ENCODE measurements at regions of chr1 and their contacts with region 1.

Region 1: DNA sequence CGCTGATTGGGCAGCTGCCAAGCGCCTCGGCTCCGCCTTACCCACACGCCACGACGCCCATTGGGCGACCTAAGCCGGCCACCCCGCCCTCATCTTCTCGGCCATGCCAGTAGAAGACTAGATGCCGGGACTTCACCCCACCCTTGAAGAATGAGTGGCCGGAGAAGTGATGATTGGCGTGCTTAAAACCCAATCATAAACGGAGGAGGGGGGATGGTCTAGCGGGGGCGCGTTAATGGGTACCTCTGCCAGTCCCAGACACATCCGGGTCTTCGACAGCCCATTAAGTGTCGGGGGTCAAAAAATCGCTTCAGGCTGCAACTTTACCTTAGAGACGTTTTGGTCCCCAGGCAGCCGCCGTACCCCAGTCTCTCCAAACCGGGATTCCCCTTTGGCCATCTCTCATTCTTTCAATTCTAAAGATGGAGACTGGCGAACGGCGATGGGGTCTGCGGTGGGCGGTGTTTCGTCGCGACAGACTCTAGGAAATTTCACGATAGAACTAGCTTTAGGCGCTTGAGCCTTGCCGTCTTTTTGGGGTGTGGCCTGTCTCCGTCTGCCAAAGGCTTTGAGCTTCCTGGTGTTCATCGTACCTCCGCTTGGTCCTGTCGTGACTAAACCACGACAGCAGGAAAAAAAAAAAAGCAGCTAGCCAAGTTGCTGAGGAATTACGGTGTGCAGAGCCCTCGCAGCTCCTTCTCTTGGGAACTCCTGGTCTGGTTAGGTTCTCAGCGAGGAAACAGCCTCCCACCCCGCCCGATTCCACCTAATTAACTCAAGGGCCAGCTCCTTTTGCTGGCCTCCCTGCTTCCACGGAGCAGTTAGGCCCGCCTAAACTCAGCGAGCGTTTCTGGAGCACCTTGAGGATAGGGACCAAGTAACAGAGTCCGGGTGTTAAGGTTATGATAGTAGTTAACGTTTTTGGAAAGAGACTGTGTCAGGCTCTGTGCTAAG is at the start of gene GATAD2B:
- DNase-seq: peak; percentile 97 to 100 (median 98)
- ATAC-seq: peak; percentile 89
- H3K4me3 ChIP-seq: peak within 1 kb of the TSS; percentile 91
- H3K4me3 Mint-ChIP-seq: peak within 1 kb of the TSS; percentile 96
- H3K27ac ChIP-seq: peak within 1 kb of the TSS; percentile 95
- H3K27ac Mint-ChIP-seq: peak within 1 kb of the TSS; percentile 99
- H3K4me1 ChIP-seq: peaks cover 48% of the 10 kb centered on the region
- H3K4me1 Mint-ChIP-seq: peaks cover 56% of the 10 kb centered on the region
- H3K27me3 ChIP-seq: no peaks in the 10 kb centered on the region
- H3K27me3 Mint-ChIP-seq: peaks cover 6% of the 10 kb centered on the region
- CTCF ChIP-seq: no peak
- total RNA-seq, gene GATAD2B: 51.6 to 52.3 TPM

Region 2: DNA sequence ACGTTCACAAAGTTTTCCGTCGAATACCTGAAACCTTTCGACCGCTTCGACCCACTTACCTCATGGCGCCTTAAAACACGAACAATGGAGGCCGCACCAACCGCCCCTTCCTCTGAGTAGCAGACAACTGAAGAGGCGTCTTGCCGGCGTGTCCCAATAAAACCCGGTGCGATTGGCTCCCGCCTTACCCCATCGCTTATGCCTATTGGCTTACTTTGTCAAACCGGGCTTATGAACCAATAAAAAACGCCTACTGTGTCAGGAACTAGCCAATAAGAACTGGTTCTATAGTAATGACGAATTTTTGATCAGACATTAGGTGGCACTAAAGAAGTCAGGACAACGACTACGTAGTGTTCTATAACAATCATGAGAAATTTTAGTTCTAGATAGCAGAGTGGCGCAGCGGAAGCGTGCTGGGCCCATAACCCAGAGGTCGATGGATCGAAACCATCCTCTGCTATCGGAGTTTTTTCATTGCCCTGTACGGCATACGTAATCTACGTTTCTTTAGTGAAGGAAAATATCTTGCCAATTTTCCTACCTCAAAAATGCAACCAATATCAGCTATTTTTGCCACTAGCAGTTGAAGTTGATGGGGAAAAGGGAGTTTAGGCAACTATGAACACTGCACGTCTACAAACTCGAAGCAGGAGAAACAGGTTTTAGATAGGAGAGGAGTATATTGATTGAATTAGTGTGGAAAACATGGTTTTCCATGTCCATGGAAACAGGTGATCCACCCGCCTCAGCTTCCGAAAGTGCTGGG is 252.2 kb before region 1 on chr1 and contains the start of gene ILF2:
- CTCF ChIA-PET with region 1: no interaction called
- POLR2A ChIA-PET with region 1: no interaction called
- intact Hi-C with region 1: loop called in 1 of 2 experiments (anchors 10 kb)
- DNase-seq: peak; percentile 94 to 100 (median 97)
- ATAC-seq: peak; percentile 87
- H3K4me3 ChIP-seq: peak within 1 kb of the TSS; percentile 84
- H3K4me3 Mint-ChIP-seq: no peak within 1 kb of the TSS
- H3K27ac ChIP-seq: peak within 1 kb of the TSS; percentile 89 to 91
- H3K27ac Mint-ChIP-seq: no peak within 1 kb of the TSS
- H3K4me1 ChIP-seq: peaks cover 36% of the 10 kb centered on the region
- H3K4me1 Mint-ChIP-seq: peaks cover 25% of the 10 kb centered on the region
- H3K27me3 ChIP-seq: no peaks in the 10 kb centered on the region
- H3K27me3 Mint-ChIP-seq: no peaks in the 10 kb centered on the region
- CTCF ChIP-seq: peak; percentile 28
- total RNA-seq, gene ILF2: 140 to 147 TPM

Region 3: DNA sequence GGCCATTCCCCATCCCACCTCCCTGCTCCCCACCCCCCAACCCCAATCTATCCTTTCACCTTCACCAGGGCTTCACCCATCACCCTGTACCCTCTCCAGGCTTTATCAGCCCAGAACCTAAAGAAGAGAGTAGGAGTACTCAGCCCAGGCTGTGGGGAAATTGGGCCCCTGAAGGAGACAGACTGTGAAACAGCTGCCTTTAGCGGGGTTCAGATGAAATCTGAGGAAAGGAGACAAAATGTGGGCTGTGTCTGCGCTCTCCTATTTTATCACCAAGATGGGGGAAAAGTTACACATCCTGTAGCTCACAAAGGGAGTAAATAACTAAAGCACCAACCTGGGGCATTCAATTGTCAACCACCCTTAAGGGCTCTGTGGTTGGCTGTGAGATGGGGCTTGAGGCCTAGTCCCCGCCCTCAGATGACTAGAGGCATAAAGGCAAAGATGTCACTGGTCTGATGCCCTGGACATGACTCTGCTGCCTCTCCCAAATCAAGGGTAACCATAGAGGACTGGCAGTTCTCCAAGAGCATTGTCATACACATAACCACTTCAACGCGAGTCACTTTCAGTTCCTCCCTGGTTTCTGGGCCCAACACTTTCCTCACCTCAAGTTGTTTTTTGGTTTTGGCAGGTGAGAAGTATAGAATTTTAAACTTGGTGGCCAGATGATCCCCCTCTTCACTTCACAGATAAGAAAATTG is 118.1 kb before region 1 on chr1:
- CTCF ChIA-PET with region 1: no interaction called
- POLR2A ChIA-PET with region 1: interaction called, 5 read pairs
- intact Hi-C with region 1: loop called in 1 of 2 experiments (anchors 1 kb)
- DNase-seq: peak in 13 of 14 experiments; percentile 21 to 93 (median 49)
- ATAC-seq: peak; percentile 98
- H3K4me3 ChIP-seq: no peak overlapping the region
- H3K4me3 Mint-ChIP-seq: peak overlapping the region; percentile 22
- H3K27ac ChIP-seq: peak overlapping the region; percentile 61 to 62
- H3K27ac Mint-ChIP-seq: peak overlapping the region; percentile 86
- H3K4me1 ChIP-seq: peaks cover 21% of the 10 kb centered on the region
- H3K4me1 Mint-ChIP-seq: peaks cover 42% of the 10 kb centered on the region
- H3K27me3 ChIP-seq: no peaks in the 10 kb centered on the region
- H3K27me3 Mint-ChIP-seq: no peaks in the 10 kb centered on the region
- CTCF ChIP-seq: no peak

Region 4: GRCh38 chr1:153880962-153881361 is 42.3 kb before region 1 on chr1:
- CTCF ChIA-PET with region 1: no interaction called
- POLR2A ChIA-PET with region 1: interaction called, 6 read pairs
- intact Hi-C with region 1: loop called in 1 of 2 experiments (anchors 5 kb)
- DNase-seq: peak in 12 of 14 experiments; percentile 3 to 72 (median 36)
- ATAC-seq: peak; percentile 81
- H3K4me3 ChIP-seq: no peak overlapping the region
- H3K4me3 Mint-ChIP-seq: no peak overlapping the region
- H3K27ac ChIP-seq: no peak overlapping the region
- H3K27ac Mint-ChIP-seq: no peak overlapping the region
- H3K4me1 ChIP-seq: peaks cover 16% of the 10 kb centered on the region
- H3K4me1 Mint-ChIP-seq: peaks cover 27% of the 10 kb centered on the region
- H3K27me3 ChIP-seq: no peaks in the 10 kb centered on the region
- H3K27me3 Mint-ChIP-seq: no peaks in the 10 kb centered on the region
- CTCF ChIP-seq: no peak

Region 5: DNA sequence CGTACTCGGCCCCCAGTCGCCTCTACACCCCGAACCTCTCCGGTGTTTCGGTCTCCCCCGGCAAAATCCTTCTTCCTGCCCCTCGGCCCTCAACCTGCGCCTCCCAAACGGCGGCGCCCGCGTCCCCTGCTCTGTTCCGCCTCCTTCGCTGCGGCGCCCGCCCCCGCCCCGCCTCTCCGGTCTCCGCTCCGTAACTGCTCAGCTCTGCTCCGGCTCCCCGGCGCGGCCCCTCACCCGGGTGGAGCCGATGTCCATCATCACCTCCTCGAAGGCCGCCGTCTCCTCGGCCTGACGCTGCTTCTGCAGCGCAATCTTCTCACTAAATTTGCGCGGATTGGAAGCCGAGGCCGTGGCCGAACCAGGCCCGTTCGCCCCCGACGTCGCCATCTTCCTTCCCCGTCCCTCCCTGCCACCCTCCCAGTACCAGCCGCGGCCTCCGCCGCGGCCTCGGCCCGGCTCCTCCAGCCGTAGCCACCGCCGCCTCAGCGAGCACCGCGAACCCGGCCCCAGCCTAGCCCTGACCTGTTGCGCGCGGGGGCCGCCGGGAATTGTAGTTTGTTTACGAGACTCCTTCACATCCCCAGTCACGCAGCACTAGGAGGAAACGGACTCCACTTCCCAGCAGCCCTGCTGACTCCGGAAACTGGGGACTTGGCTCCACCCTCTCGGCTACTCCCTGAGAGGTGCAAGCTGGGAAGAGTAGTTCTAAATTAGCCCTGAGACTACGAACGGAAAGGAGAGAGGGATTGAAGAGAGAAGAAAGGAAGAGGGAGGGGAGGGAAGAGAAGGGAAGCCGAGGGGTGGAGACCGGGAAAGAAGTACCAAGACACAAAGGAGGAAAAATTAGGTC is 35.1 kb after region 1 on chr1 and contains the start of gene CRTC2:
- CTCF ChIA-PET with region 1: no interaction called
- POLR2A ChIA-PET with region 1: interaction called, 40 read pairs
- intact Hi-C with region 1: loop called (anchors 1 to 5 kb)
- DNase-seq: peak; percentile 93 to 99 (median 97)
- ATAC-seq: peak; percentile 88
- H3K4me3 ChIP-seq: peak within 1 kb of the TSS; percentile 75
- H3K4me3 Mint-ChIP-seq: peak within 1 kb of the TSS; percentile 94
- H3K27ac ChIP-seq: peak within 1 kb of the TSS; percentile 89 to 91
- H3K27ac Mint-ChIP-seq: peak within 1 kb of the TSS; percentile 89
- H3K4me1 ChIP-seq: peaks cover 65% of the 10 kb centered on the region
- H3K4me1 Mint-ChIP-seq: peaks cover 68% of the 10 kb centered on the region
- H3K27me3 ChIP-seq: no peaks in the 10 kb centered on the region
- H3K27me3 Mint-ChIP-seq: no peaks in the 10 kb centered on the region
- CTCF ChIP-seq: no peak
- total RNA-seq, gene CRTC2: 147 to 152 TPM

Region 6: DNA sequence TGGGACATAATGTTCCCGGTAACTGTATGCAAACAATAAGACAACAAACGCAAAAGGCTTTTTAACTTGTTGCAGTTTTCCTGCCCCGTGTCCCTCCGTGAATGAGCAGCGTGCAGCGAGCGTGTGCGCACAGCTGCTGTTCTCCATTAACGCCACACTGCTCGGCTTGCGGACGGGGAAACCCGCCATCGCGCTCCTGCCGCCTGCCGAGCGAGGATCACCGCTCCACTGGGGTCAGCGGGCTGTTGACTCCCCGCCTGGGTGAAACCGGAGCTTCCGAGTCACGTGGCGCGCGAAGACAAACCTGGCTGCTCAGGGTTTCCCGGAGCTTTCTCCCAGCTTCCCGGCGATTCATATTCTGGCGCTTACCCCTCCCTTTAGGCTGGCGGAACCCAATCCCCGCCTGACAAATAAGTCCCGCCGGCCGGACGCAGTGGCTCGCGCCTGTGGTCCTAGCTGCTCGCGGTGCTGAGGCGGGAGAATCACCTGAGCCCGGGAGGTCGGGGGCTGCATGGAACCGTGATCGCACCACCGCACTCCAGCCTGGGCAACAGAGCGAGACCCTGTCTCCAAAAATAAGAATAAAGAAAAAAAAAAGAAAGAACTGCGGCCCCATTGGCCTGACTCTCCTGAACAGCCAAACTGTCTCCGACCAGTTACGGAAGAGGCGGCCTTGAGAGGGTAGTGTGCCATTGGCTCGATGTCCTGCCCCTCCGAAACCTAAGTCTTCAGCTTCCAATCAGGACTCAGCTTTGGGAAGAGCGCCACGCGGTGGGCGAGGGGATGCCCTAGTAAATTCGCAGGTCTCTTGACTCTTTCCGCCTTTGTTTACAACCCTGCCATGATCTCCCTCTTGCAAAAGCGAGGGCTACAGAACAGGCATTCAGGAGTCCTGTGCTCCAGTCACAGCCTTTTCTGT is 44.1 kb after region 1 on chr1 and contains the start of gene CREB3L4:
- CTCF ChIA-PET with region 1: interaction called, 4 read pairs
- POLR2A ChIA-PET with region 1: interaction called, 33 read pairs
- intact Hi-C with region 1: no loop called
- DNase-seq: peak; percentile 64 to 95 (median 80)
- ATAC-seq: peak; percentile 87
- H3K4me3 ChIP-seq: peak within 1 kb of the TSS; percentile 75
- H3K4me3 Mint-ChIP-seq: peak within 1 kb of the TSS; percentile 96
- H3K27ac ChIP-seq: peak within 1 kb of the TSS; percentile 82 to 83
- H3K27ac Mint-ChIP-seq: peak within 1 kb of the TSS; percentile 94
- H3K4me1 ChIP-seq: peaks cover 60% of the 10 kb centered on the region
- H3K4me1 Mint-ChIP-seq: peaks cover 58% of the 10 kb centered on the region
- H3K27me3 ChIP-seq: no peaks in the 10 kb centered on the region
- H3K27me3 Mint-ChIP-seq: no peaks in the 10 kb centered on the region
- CTCF ChIP-seq: peak; percentile 32
- total RNA-seq, gene CREB3L4: 2.9 to 3.9 TPM

Region 7: DNA sequence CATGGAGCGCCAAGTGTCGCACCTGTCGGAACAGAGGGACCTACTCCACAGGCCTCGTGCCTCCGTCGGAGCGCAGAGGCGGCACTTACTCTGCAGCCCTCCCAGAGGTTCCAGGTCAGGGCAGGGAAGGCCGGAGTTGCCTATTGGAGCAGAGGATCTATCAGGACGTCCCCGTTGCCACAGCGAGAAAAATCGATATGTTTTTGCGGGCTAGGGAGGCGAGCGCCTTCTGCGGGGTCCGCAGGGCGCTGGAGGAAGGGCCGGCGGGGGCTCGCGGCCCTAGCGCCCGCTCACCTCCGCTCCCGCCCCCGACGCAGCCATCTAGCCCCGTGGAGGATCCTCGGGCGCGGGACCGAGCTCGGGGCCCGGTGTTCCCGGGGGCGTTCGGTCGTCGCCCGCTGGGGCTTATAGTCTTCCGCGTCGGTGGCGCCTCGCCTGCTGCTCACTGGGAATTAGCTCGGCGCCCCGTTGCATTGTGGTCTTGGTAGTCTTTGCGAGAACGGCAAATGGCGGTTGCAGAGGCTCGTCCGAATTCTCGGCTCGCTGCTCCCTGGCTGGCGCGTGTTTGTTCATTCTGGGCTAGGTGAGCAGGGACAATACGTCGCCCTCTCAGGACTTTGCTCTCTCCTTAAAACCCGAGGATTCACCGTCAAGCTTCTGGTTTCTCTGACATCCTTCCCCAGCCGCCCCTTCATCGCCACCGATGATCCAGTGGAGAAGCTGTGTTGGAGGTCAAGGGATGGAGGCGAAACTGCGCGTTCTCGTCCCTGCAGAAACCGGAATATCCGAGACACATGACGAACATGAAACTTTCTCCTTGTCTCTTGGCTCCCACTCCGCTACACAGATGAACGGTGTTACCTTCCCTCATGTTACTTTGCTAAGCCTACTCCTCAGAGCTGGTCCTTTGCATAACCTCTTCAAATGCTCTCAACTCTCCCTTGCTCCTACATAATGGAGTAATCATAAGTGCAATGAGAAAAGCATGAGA is 54.3 kb after region 1 on chr1 and contains the start of gene JTB:
- CTCF ChIA-PET with region 1: interaction called, 4 read pairs
- POLR2A ChIA-PET with region 1: interaction called, 34 read pairs
- intact Hi-C with region 1: loop called in 1 of 2 experiments (anchors 1 kb)
- DNase-seq: peak; percentile 68 to 91 (median 82)
- ATAC-seq: peak; percentile 96
- H3K4me3 ChIP-seq: peak within 1 kb of the TSS; percentile 82
- H3K4me3 Mint-ChIP-seq: peak within 1 kb of the TSS; percentile 98
- H3K27ac ChIP-seq: peak within 1 kb of the TSS; percentile 80 to 83
- H3K27ac Mint-ChIP-seq: peak within 1 kb of the TSS; percentile 94
- H3K4me1 ChIP-seq: peaks cover 31% of the 10 kb centered on the region
- H3K4me1 Mint-ChIP-seq: peaks cover 42% of the 10 kb centered on the region
- H3K27me3 ChIP-seq: no peaks in the 10 kb centered on the region
- H3K27me3 Mint-ChIP-seq: no peaks in the 10 kb centered on the region
- CTCF ChIP-seq: no peak
- total RNA-seq, gene JTB: 80.4 to 80.9 TPM